Endothelial cell of umbilical vein (primary cell): ENCODE measurements at regions of chr3 and their contacts with region 1.

Region 1: DNA sequence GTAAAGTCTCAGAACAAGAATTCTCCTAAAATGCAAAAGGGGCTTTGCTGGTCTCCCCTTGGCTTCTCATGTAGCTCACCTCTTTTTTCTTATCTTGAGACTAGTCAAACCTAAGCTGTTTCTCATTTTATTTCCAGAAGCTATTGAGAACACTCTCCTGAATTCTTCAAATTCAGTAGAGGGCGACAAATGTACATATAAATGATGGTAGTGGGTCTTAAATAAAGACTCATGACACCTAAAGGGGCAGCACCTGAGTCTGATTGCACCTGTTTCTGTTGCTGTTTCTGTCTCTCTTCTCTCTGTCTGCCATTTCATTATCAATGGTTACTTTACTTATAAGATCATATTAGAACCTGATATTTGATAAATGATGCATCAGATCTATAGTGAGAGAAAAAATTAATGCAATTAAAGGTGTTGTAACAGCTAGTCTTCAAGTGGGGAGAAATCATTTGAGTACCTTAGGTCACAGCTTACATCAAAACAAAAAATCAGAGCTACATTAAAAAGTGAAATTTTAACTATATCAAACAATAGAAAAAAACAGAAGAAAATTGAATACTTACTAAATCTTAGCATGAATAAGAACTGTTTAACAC is 7.0 kb downstream of the ADIPOQ start:
- DNase-seq: peak; percentile 74
- H3K4me3 ChIP-seq: no peak overlapping the region
- H3K27ac ChIP-seq: no peak overlapping the region
- H3K4me1 ChIP-seq: no peaks in the 10 kb centered on the region
- H3K27me3 ChIP-seq: no peaks in the 10 kb centered on the region
- CTCF ChIP-seq: peak; percentile 3 to 20
- POLR2A ChIP-seq: no peak

Region 2: GRCh38 chr3:186588337-186589006 is 261.0 kb before region 1 on chr3:
- CTCF ChIA-PET with region 1: no interaction called
- POLR2A ChIA-PET with region 1: no interaction called
- dilution Hi-C with region 1: no loop called
- intact Hi-C with region 1: no loop called
- DNase-seq: no peak
- H3K4me3 ChIP-seq: no peak overlapping the region
- H3K27ac ChIP-seq: no peak overlapping the region
- H3K4me1 ChIP-seq: no peaks in the 10 kb centered on the region
- H3K27me3 ChIP-seq: no peaks in the 10 kb centered on the region
- CTCF ChIP-seq: no peak
- POLR2A ChIP-seq: no peak

Region 3: GRCh38 chr3:186826976-186827731 is 22.3 kb before region 1 on chr3:
- CTCF ChIA-PET with region 1: interaction called, 12 read pairs
- POLR2A ChIA-PET with region 1: no interaction called
- dilution Hi-C with region 1: no loop called
- intact Hi-C with region 1: no loop called
- DNase-seq: peak; percentile 78
- H3K4me3 ChIP-seq: peak overlapping the region; percentile 28 to 69 (median 52)
- H3K27ac ChIP-seq: no peak overlapping the region
- H3K4me1 ChIP-seq: peaks cover 6% of the 10 kb centered on the region
- H3K27me3 ChIP-seq: peaks cover 30 to 37% of the 10 kb centered on the region in 2 experiments
- CTCF ChIP-seq: no peak
- POLR2A ChIP-seq: peak; percentile 82

Region 4: GRCh38 chr3:186953011-186953487 is 103.6 kb after region 1 on chr3:
- CTCF ChIA-PET with region 1: interaction called, 19 read pairs
- POLR2A ChIA-PET with region 1: no interaction called
- dilution Hi-C with region 1: no loop called
- intact Hi-C with region 1: no loop called
- DNase-seq: peak; percentile 79
- H3K4me3 ChIP-seq: no peak overlapping the region
- H3K27ac ChIP-seq: peak overlapping the region; percentile 26
- H3K4me1 ChIP-seq: peaks cover 18% of the 10 kb centered on the region
- H3K27me3 ChIP-seq: no peaks in the 10 kb centered on the region
- CTCF ChIP-seq: no peak
- POLR2A ChIP-seq: no peak

Region 5: DNA sequence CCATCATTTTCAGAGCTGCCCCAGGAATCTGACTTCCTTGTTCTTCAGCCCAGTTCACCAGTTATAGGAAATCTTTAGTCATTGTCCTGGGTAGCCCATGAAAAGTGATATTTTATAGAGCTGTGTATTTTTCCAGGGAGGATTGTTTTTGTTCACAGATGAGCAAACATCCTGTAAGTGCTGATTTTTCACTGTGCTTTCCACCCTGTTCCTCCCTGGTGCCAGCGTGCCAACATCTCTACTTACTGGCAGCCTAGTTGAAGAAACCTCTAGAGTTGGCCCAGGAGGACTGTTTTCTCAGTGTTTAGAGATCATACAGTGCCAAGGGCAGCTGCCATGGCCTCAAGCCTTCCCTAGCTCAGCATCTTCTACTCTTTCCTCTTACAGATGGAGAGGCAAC is 122.1 kb after region 1 on chr3:
- CTCF ChIA-PET with region 1: interaction called, 18 read pairs
- POLR2A ChIA-PET with region 1: interaction called, 3 read pairs
- dilution Hi-C with region 1: no loop called
- intact Hi-C with region 1: no loop called
- DNase-seq: peak; percentile 86
- H3K4me3 ChIP-seq: no peak overlapping the region
- H3K27ac ChIP-seq: peak overlapping the region; percentile 56
- H3K4me1 ChIP-seq: peaks cover 28% of the 10 kb centered on the region
- H3K27me3 ChIP-seq: no peaks in the 10 kb centered on the region
- CTCF ChIP-seq: no peak
- POLR2A ChIP-seq: no peak

Region 6: GRCh38 chr3:187101184-187102072 is 252.0 kb after region 1 on chr3:
- CTCF ChIA-PET with region 1: interaction called, 12 read pairs
- POLR2A ChIA-PET with region 1: no interaction called
- dilution Hi-C with region 1: no loop called
- intact Hi-C with region 1: no loop called
- DNase-seq: peak; percentile 90
- H3K4me3 ChIP-seq: peak overlapping the region; percentile 36 to 81 (median 71)
- H3K27ac ChIP-seq: peak overlapping the region; percentile 62
- H3K4me1 ChIP-seq: peaks cover 13% of the 10 kb centered on the region
- H3K27me3 ChIP-seq: no peaks in the 10 kb centered on the region
- CTCF ChIP-seq: no peak
- POLR2A ChIP-seq: no peak

Region 7: DNA sequence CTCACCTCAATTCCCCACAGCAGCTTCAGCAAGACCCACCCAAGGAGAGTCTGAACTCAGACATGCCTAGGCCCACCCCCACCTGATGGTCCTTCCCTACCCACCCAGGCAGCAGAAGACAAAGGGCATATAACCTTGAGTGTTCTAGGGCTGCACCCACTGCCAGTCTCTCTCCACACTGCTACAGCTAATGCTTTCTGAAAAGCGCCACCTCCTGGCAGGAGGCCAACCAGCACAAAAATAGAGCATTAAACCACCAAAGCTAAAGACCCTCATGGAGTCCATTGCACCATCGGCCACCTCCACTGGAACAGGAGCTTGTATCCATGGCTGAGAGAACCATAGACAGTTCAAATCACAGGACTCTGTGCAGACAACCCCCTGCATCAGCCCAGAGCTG is 301.1 kb after region 1 on chr3:
- CTCF ChIA-PET with region 1: interaction called, 37 read pairs
- POLR2A ChIA-PET with region 1: no interaction called
- dilution Hi-C with region 1: no loop called
- intact Hi-C with region 1: loop called (anchors 1 kb)
- DNase-seq: peak; percentile 16
- H3K4me3 ChIP-seq: no peak overlapping the region
- H3K27ac ChIP-seq: no peak overlapping the region
- H3K4me1 ChIP-seq: no peaks in the 10 kb centered on the region
- H3K27me3 ChIP-seq: peaks cover 2 to 7% of the 10 kb centered on the region in 2 experiments
- CTCF ChIP-seq: peak; percentile 10 to 22
- POLR2A ChIP-seq: no peak